ENCODE measurements at regions of chr11 and their contacts with region 1.

Region 1: GRCh38 chr11:69296890-69297786 is 3.2 kb downstream of the MYEOV start:
- DNase-seq: peak; percentile 93
- ATAC-seq: peak; percentile 67
- H3K4me3 Mint-ChIP-seq: peak overlapping the region; percentile 67
- H3K27ac Mint-ChIP-seq: peak overlapping the region; percentile 96
- H3K4me1 Mint-ChIP-seq: peaks cover 59% of the 10 kb centered on the region
- H3K27me3 Mint-ChIP-seq: peaks cover 6% of the 10 kb centered on the region

Region 2: GRCh38 chr11:69311767-69312385 is 14.7 kb after region 1 on chr11:
- CTCF ChIA-PET with region 1: interaction called, 24 read pairs
- DNase-seq: peak; percentile 60
- ATAC-seq: peak; percentile 56
- H3K4me3 Mint-ChIP-seq: no peak overlapping the region
- H3K27ac Mint-ChIP-seq: peak overlapping the region; percentile 85
- H3K4me1 Mint-ChIP-seq: peaks cover 19% of the 10 kb centered on the region
- H3K27me3 Mint-ChIP-seq: no peaks in the 10 kb centered on the region

Region 3: DNA sequence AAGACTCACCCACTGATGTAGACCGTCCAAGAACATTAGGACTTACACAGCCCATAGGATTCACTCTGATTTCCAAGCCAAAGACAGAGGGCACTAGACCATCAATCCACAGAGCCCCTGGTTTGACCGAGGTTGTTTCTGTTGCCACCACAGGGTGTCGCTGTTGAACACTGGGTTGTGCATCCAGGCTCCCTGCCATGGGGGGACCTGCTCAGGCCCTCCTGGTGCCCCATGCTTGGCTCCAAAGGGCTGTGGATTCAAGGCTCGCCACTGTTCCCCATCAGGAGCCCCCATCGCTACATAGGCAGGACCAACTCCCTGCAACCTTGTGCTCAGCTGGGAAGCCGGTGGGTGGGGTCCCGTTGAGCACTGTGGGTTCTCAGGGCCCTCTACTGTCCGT is 653.0 kb after region 1 on chr11:
- CTCF ChIA-PET with region 1: no interaction called
- DNase-seq: peak; percentile 46
- ATAC-seq: no peak
- H3K4me3 Mint-ChIP-seq: no peak overlapping the region
- H3K27ac Mint-ChIP-seq: no peak overlapping the region
- H3K4me1 Mint-ChIP-seq: no peaks in the 10 kb centered on the region
- H3K27me3 Mint-ChIP-seq: no peaks in the 10 kb centered on the region